ENCODE measurements at regions of chr12 and their contacts with region 1.

Region 1: DNA sequence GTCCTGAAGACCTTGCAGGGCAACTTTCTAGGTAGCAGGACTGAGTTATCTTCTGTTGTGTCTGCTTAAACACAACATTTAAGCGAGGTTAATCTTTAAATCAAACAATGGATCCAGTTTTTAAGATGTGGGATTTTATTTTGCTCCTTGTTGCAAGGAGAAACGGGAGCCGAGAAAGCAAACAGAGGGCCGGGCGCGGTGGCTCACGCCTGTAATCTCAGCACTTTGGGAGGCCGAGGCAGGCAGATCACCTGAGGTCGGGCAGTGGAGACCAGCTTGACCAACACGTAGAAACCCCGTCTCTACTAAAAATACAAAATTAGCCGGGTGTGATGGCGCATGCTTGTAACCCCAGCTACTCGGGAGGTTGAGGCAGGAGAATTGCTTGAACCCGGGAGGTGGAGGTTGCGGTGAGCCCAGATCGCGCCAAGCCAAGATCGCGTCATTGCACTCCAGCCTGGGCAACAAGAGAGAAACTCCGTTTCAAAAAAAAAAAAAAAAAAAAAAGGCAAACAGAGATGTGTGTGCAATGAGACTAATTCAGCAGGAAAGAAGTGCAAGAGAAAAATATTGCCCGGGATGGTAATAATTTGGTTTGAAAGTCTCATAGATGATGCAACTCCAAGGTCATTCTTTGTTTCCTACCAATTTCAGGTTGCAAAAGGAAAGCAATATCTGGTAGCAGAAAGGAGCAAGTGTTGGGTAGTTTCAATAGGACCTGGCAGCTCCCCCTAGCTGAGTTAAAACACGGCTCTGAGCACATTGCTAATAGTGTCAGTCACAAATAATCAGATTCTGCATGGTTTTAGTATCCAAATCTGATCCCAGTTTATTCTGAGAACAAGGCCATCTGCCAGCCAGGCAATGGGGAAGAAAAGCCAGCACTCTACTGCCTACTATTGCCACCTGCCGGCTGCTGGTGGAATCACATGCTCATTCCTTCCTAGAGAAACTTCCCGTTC is 141.4 kb downstream of the PPM1H start:
- DNase-seq: peak; percentile 75
- ATAC-seq: peak; percentile 60
- H3K4me3 Mint-ChIP-seq: no peak overlapping the region
- H3K27ac Mint-ChIP-seq: no peak overlapping the region
- H3K4me1 Mint-ChIP-seq: peaks cover 3% of the 10 kb centered on the region
- H3K27me3 Mint-ChIP-seq: peaks cover 27% of the 10 kb centered on the region

Region 2: DNA sequence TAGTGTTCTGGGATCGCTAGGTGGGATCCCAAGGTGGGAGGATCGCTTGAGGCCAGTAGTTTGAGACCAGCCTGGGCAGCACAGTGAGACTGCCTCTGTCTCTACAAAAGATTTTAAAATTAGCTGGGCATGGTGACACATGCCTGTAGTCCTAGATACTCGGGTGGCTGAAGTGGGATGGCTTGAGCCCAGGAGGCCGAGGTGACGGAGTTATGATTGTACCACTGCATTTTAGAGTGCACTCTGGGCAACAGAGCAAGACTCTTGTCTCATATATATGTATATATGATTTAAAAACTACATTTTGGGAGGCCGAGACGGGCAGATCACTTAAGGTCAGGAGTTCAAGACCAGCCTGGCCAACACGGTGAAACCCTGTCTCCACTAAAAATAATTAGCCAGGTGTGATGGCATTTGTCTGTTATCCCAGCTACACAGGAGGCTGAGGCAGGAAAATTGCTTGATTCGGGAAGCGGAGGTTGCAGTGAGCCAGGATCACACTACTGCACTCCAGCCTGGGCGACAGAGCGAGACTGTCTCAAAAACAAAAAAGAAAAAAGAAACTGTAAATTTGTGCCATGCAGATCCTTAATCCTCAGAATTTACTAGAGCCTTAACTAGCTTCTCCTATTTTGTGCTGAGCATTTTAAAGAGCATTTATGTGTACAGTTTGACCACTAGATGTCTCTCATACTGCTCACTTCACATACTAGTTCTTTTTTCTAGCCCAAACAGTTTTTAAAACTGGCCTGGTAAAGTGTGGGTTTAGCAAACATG is 212.1 kb before region 1 on chr12:
- CTCF ChIA-PET with region 1: interaction called, 58 read pairs
- DNase-seq: no peak
- ATAC-seq: no peak
- H3K4me3 Mint-ChIP-seq: no peak overlapping the region
- H3K27ac Mint-ChIP-seq: no peak overlapping the region
- H3K4me1 Mint-ChIP-seq: no peaks in the 10 kb centered on the region
- H3K27me3 Mint-ChIP-seq: no peaks in the 10 kb centered on the region

Region 3: DNA sequence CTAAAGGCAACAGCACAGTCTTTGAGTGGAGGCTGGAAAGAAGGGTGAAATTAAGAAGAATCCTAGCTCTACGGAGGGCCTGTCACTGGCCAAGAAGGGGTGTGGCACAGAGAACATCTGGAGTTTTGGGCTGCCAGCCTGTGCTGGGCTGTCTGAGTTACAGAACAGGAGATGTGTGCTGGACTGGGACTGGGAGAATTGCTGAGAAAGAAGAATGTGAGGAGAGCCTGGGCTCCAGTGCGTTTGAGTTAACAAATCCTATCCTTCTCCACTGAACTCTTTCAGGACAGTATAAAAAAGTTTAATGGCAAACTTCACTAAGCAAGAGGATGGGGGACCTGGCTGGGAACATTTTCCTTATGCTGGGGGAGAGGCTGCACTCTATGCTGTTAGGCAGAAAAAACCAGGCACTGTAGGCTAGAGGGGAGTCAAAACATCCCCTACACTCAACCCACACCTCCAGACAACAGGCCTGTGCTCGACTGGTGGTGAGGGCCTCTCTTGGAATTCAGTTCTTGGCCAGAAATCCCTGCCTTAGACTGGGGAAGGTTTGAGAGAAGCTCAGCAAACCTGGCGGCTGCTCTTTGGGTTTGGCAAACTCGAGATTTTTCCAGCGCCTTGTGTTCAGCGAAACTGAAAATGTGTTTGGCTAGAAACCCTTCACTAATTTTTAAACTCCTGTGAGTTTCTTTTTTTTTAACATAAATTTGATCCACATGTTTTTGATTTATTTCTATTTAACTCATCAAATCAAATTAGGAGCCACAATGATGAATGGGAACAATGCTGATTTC is 109.6 kb before region 1 on chr12:
- CTCF ChIA-PET with region 1: no interaction called
- DNase-seq: no peak
- ATAC-seq: no peak
- H3K4me3 Mint-ChIP-seq: no peak overlapping the region
- H3K27ac Mint-ChIP-seq: no peak overlapping the region
- H3K4me1 Mint-ChIP-seq: no peaks in the 10 kb centered on the region
- H3K27me3 Mint-ChIP-seq: peaks cover 27% of the 10 kb centered on the region

Region 4: DNA sequence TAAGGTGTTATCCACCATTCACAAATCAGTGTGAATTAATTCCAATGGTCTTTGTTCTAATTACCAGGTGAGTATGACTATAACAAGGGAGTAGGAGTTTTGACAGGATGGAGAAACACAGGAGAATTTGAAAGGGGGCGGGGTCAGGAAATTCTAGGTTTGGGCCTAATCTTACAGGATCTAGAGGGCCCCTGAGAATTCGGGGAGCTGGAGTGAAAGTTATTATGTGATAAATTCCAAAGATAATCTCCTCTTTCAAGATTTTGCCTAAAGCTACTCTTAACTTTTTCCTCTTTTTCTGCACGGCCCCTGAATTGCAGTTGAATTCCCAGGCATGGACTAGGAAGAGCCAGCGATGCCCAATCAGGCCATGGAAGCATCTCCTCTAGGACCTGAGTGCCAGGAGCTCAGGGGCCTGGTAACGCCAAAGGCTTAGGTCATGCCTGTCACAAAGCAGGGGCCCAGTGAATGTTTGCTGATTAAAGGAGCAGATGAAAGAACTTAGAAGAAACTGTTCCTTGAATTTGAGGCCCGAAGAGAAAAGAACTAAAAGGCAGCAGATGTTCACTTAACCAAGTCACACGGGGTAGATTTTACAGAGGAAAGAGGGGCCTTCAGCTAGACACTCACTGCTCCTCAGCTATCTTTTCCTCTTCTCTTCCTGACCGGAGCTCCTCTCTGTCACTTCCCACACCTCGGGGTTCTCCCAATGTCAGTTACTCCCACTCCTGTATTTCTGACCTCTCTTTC is 54.1 kb before region 1 on chr12:
- CTCF ChIA-PET with region 1: no interaction called
- DNase-seq: no peak
- ATAC-seq: no peak
- H3K4me3 Mint-ChIP-seq: no peak overlapping the region
- H3K27ac Mint-ChIP-seq: no peak overlapping the region
- H3K4me1 Mint-ChIP-seq: peaks cover 3% of the 10 kb centered on the region
- H3K27me3 Mint-ChIP-seq: peaks cover 4% of the 10 kb centered on the region

Region 5: GRCh38 chr12:62813031-62813829 is 19.7 kb after region 1 on chr12:
- CTCF ChIA-PET with region 1: interaction called, 30 read pairs
- DNase-seq: peak; percentile 53
- ATAC-seq: peak; percentile 58
- H3K4me3 Mint-ChIP-seq: peak overlapping the region; percentile 37
- H3K27ac Mint-ChIP-seq: no peak overlapping the region
- H3K4me1 Mint-ChIP-seq: peaks cover 13% of the 10 kb centered on the region
- H3K27me3 Mint-ChIP-seq: peaks cover 56% of the 10 kb centered on the region

Measured in activated CD8-positive, alpha-beta memory T cell treated with anti-CD3 and anti-CD28 coated beads, Interleukin-2, amount 10 ng/mL, durations not matched to agents 7 days and 5 days (primary cell).